OCI-LY7 (cell line): ENCODE measurements at regions of chr7 and their contacts with region 1.

Region 1: GRCh38 chr7:140003913-140004382 is 58.8 kb downstream of the PARP12 start:
- DNase-seq: peak; percentile 78
- H3K4me3 ChIP-seq: no peak overlapping the region
- H3K27ac ChIP-seq: no peak overlapping the region
- H3K4me1 ChIP-seq: no peaks in the 10 kb centered on the region
- CTCF ChIP-seq: peak; percentile 92

Region 2: GRCh38 chr7:139505563-139505962 is 498.4 kb before region 1 on chr7:
- CTCF ChIA-PET with region 1: no interaction called
- POLR2A ChIA-PET with region 1: no interaction called
- intact Hi-C with region 1: loop called (anchors 2 kb)
- DNase-seq: peak; percentile 16
- H3K4me3 ChIP-seq: no peak overlapping the region
- H3K27ac ChIP-seq: no peak overlapping the region
- H3K4me1 ChIP-seq: no peaks in the 10 kb centered on the region
- CTCF ChIP-seq: peak; percentile 55

Region 3: DNA sequence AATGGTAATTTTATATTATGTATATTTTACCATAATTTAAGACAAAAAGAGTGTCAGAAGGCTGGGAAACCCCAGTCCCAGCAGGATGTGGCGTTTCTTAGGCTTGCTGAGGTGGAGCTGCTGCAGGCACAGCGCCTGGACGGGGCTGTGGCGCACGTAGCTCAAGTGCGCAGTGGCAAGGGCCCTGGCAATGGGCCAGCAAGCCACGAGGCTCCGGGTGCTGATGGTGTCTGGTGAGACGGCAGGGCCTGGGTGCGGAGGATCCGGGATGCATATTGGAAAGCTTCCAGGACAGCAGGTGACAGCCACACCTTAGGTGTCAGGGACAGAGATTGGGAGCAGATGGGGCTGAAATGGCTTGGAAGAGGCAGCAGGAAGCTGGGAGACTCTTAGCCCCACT is 443.3 kb before region 1 on chr7:
- CTCF ChIA-PET with region 1: no interaction called
- POLR2A ChIA-PET with region 1: no interaction called
- intact Hi-C with region 1: no loop called
- DNase-seq: no peak
- H3K4me3 ChIP-seq: no peak overlapping the region
- H3K27ac ChIP-seq: no peak overlapping the region
- H3K4me1 ChIP-seq: no peaks in the 10 kb centered on the region
- CTCF ChIP-seq: no peak

Region 4: GRCh38 chr7:139602143-139602722 is 401.7 kb before region 1 on chr7:
- CTCF ChIA-PET with region 1: no interaction called
- POLR2A ChIA-PET with region 1: no interaction called
- intact Hi-C with region 1: loop called (anchors 2 kb)
- DNase-seq: peak; percentile 57
- H3K4me3 ChIP-seq: no peak overlapping the region
- H3K27ac ChIP-seq: no peak overlapping the region
- H3K4me1 ChIP-seq: no peaks in the 10 kb centered on the region
- CTCF ChIP-seq: peak; percentile 81

Region 5: DNA sequence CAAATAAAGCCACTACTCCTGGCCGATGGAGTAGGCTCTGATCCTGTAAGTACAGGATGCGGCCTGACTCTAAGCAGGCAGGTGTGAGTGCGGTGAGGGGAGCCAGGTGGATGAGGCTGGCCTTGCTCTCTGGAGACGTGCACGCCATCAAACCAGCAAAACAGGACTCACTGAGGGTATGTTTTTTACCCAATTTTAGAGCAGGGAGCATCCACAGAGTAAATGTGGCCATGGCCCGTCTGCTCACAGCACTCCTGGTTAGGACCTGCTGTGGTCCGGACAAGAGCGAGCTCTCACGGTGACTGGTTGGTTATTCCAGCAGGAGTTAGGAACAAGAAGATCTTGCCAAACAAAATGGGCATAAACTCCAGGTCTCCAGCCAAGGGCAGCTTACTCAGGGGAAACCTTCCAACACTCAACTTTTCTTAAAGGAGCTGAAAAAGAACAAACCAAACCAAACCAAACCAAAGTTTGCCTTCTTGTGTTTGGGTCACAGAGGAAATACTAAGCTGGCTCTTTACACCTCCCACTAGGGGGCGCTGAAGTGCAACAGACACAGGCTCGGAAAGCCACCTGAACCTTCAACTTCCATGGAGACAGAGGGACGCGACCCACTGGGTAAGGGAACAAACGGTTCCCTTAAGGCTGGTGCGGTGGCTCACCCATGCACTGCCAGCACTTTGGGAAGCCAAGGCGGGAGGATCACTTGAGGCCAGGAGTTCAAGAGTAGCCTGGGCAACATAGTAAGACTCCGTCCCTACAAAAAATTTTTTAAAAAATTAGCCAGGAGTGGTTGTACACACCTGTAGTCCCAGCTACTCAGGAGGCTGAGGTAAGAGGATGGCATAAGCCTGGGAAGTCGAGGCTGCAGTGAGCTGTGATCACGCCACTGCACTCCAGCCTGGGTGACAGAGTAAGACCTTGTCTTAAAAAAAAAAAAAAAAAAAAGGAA is 358.1 kb before region 1 on chr7:
- CTCF ChIA-PET with region 1: interaction called, 7 read pairs
- POLR2A ChIA-PET with region 1: interaction called, 3 read pairs
- intact Hi-C with region 1: loop called (anchors 1 kb)
- DNase-seq: peak; percentile 82
- H3K4me3 ChIP-seq: no peak overlapping the region
- H3K27ac ChIP-seq: no peak overlapping the region
- H3K4me1 ChIP-seq: peaks cover 15% of the 10 kb centered on the region
- CTCF ChIP-seq: peak; percentile 94

Region 6: GRCh38 chr7:139777948-139778841 is 225.8 kb before region 1 on chr7 and contains the start of gene HIPK2:
- CTCF ChIA-PET with region 1: no interaction called
- POLR2A ChIA-PET with region 1: no interaction called
- intact Hi-C with region 1: loop called (anchors 1 kb)
- DNase-seq: peak; percentile 80
- H3K4me3 ChIP-seq: peak within 1 kb of the TSS; percentile 82
- H3K27ac ChIP-seq: peak within 1 kb of the TSS; percentile 0
- H3K4me1 ChIP-seq: peaks cover 23% of the 10 kb centered on the region
- CTCF ChIP-seq: no peak
- total RNA-seq, gene HIPK2: 5.9 and 6.2 TPM in 2 replicates

Region 7: DNA sequence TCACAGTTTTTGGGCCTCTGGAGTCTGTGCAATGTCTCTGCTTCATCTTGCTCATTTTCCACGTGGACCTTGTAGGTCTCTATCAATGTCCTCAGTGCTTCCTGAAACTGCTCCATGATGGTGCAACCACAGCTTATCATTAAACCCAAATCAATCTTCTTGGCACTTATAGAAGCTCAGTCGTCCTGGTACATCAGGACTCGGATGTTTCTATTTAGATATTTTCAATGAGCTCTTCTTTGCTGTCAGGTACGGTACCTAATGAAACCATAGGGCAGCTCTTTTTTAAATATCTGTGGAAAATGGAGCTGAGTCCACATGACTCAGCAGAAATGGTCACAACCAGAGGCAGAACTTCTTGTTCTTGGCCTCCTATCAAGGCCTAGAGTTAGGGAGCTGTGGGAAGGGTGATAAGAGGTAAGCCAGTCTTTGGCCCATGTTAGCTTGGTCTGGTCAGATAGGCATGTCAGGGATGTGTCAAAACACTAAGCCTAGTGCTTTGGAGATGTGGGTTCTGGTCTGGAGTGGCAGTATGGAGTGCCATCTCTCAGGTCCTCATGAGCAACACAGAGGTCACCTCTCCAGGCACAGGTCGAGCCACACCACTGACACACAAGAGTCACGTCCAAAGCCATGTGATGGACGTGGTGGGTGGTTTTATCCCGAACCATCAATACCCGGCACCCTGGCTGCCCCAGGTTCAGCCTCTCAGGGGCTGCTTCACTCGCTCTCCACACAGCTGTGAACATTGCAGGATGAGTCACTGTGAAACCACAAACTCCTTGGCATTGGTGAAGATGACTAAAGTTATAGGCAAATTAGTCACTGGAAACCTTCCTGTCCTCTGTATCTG is 87.9 kb before region 1 on chr7:
- CTCF ChIA-PET with region 1: no interaction called
- POLR2A ChIA-PET with region 1: no interaction called
- intact Hi-C with region 1: loop called (anchors 1 kb)
- DNase-seq: peak; percentile 89
- H3K4me3 ChIP-seq: peak overlapping the region; percentile 60
- H3K27ac ChIP-seq: peak overlapping the region; percentile 97
- H3K4me1 ChIP-seq: peaks cover 76% of the 10 kb centered on the region
- CTCF ChIP-seq: no peak

Region 8: DNA sequence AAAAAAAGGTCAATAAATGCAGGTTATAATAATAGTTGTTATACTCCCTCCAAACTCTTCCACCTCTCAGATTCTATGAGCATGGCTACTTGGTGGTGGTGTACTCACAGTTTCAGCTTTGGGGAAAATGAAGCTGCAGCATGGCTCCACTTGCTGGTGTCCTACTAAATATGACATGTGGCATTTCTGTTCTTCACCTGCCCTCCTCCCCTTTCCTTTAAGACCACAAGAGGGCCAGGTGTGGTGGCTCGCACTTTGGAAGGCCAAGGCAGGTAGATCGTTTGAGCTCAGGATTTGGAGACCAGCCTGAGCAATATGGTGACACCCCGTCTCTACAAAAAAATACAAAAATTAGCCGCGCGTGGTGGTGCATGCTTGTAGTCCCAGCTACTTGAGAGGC is 293.2 kb after region 1 on chr7:
- CTCF ChIA-PET with region 1: no interaction called
- POLR2A ChIA-PET with region 1: no interaction called
- intact Hi-C with region 1: no loop called
- DNase-seq: no peak
- H3K4me3 ChIP-seq: no peak overlapping the region
- H3K27ac ChIP-seq: no peak overlapping the region
- H3K4me1 ChIP-seq: no peaks in the 10 kb centered on the region
- CTCF ChIP-seq: no peak